IMR-90 (cell line): ENCODE measurements at regions of chr16 and their contacts with region 1.

Region 1: GRCh38 chr16:67384778-67385510 is 8.4 kb downstream of the TPPP3 start:
- DNase-seq: no peak
- ATAC-seq: no peak
- H3K4me3 ChIP-seq: no peak overlapping the region
- H3K27ac ChIP-seq: no peak overlapping the region
- H3K4me1 ChIP-seq: no peaks in the 10 kb centered on the region
- H3K27me3 ChIP-seq: peaks cover 33% of the 10 kb centered on the region
- CTCF ChIP-seq: no peak
- POLR2A ChIP-seq: no peak
- RAD21 ChIP-seq: no peak

Region 2: DNA sequence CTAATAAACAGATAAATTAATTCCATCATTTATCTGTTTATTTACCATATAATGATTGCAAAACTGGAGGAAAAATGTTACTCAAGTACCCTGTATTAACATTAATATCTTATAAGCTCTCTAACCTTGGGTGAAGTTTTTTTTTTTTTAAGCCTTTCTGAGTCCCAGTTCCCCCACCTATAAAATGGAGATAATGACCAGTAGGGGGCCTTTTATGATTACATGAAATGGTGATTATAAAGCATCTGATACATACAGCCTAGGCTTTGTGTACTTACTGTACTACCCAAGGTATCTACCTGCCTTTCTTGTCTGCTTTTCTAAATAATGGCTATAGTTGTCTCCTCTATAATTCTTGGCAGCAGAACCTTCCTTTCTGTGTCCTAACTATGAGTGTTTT is 35.8 kb before region 1 on chr16:
- CTCF ChIA-PET with region 1: no interaction called
- POLR2A ChIA-PET with region 1: no interaction called
- dilution Hi-C with region 1: no loop called
- in situ Hi-C with region 1: no loop called
- intact Hi-C with region 1: loop called (anchors 5 kb)
- DNase-seq: peak; percentile 44
- ATAC-seq: peak; percentile 46; the same call in 1 of the 2 replicates
- H3K4me3 ChIP-seq: no peak overlapping the region
- H3K27ac ChIP-seq: no peak overlapping the region
- H3K4me1 ChIP-seq: no peaks in the 10 kb centered on the region
- H3K27me3 ChIP-seq: peaks cover 4% of the 10 kb centered on the region
- CTCF ChIP-seq: peak; percentile 61
- POLR2A ChIP-seq: no peak
- RAD21 ChIP-seq: peak; percentile 38